ENCODE measurements at regions of chr6 and their contacts with region 1.

Region 1: DNA sequence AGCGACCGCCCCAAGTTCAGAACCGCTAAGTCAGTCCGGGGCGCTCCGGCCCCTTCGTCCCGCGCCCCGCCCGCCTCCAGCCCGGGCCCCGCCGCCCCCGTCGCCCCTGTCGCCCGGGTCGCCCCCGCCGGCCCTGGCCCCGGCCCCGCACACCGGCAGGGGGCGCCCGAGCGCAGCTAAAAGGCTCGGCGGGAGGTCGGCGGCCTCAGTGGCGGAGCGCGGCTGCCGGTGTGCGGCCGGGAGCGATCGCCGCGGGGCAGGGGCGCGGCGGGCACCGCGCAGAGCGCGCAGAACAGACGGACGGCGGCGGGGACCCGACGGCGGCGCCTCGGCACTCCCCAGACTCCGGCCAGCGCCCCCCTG is at the start of gene FNDC1:
- DNase-seq: peak; percentile 43 to 63
- H3K4me3 ChIP-seq: peak within 1 kb of the TSS; percentile 3 to 39 (median 35)
- H3K27ac ChIP-seq: peak within 1 kb of the TSS; percentile 2 to 83 (median 77)
- H3K4me1 ChIP-seq: peaks cover 29 to 34% of the 10 kb centered on the region in 2 donors
- H3K27me3 ChIP-seq: no peaks in the 10 kb centered on the region
- CTCF ChIP-seq: peak in 3 of 6 experiments; percentile 46 to 75 (median 69)
- POLR2A ChIP-seq: peak in 1 of 2 donors; percentile 78
- total RNA-seq, gene FNDC1: 13.6 to 23.2 (median 15.1) TPM

Region 2: GRCh38 chr6:159654483-159655098 is 485.4 kb after region 1 on chr6:
- intact Hi-C with region 1: loop called (anchors 5 kb)
- DNase-seq: no peak
- H3K4me3 ChIP-seq: no peak overlapping the region
- H3K27ac ChIP-seq: no peak overlapping the region
- H3K4me1 ChIP-seq: no peaks in the 10 kb centered on the region
- H3K27me3 ChIP-seq: no peaks in the 10 kb centered on the region
- CTCF ChIP-seq: peak in 5 of 6 experiments; percentile 26 to 72 (median 55)
- POLR2A ChIP-seq: no peak